HEK293 (cell line): ENCODE measurements at regions of chr19 and their contacts with region 1.

Region 1: DNA sequence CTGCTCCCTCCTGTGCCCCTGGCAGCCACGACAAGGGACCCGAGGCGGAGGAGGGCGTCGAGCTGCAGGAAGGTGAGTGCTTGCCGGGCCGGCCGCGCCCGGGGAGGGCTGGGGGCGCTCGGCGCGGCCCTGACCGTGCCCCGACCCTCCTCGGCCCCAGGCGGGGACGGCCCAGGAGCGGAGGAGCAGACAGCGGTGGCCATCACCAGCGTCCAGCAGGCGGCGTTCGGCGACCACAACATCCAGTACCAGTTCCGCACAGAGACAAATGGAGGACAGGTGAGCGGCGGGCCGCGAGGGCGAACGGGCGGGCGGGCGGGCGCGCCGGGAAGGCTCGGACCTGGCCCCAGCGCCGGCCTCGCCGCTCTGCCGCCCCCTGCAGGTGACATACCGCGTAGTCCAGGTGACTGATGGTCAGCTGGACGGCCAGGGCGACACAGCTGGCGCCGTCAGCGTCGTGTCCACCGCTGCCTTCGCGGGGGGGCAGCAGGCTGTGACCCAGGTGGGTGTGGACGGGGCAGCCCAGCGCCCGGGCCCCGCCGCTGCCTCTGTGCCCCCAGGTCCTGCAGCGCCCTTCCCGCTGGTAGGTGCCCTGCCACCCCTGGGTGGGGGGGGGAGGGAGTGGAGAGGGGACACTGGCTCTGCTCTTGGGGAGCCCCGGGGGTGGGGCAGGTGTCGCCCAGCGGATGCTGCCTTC is 807 bp downstream of the USF2 start:
- H3K4me3 ChIP-seq: peak overlapping the region; percentile 52
- H3K27ac ChIP-seq: peak overlapping the region; percentile 100
- H3K4me1 ChIP-seq: peaks cover 24% of the 10 kb centered on the region
- CTCF ChIP-seq: peak; percentile 96

Region 2: DNA sequence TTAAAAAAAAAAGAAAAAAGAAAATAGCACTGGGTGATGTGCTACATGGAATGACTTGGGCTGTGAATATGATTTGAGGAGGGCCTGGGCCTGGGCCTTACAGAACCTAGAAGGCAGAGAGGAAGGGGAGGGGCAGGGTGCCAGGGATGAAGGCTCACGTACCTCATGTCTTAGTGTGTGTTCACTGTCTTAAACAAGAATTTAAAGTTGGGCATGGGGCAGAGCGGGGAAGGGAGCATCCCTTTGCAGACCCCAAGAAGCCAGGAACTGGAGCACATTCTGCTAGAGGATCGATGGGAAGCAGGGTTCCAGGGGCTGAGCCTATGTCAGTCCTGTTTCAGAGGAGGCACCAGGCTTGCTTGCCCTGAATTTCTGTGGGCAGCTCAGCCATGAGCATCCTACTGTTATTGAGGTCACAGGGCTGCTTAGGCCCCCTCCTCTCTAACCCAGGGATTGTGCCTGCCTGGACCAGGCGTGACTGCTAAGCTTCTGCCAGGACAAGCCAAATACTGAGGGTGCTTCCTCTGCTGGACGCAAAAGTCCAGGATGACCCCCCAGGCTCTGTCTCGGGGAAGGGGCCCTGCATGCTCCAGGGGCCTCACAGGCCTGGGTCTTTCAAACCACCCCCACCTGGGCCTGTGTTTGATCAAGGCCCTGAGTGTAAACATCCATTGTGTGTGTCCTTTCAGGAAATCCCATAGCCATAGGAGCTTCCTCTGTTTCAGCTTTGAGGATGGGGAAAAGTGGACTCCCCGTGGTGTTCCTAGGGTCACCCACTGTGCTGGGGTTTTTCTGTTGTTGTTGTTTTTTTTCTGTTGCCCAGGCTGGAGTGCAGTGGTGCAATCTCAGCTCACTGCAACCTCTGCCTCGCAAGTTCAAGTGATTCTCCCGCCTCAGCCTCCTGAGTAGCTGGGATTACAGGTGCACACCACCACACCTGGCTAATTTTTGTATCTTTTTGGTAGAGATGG is 16.0 kb before region 1 on chr19:
- CTCF ChIA-PET with region 1: interaction called, 4 read pairs
- POLR2A ChIA-PET with region 1: interaction called, 35 read pairs
- H3K4me3 ChIP-seq: no peak overlapping the region
- H3K27ac ChIP-seq: no peak overlapping the region
- H3K4me1 ChIP-seq: peaks cover 6% of the 10 kb centered on the region
- CTCF ChIP-seq: no peak

Region 3: GRCh38 chr19:35279985-35280821 is 10.6 kb after region 1 on chr19:
- CTCF ChIA-PET with region 1: interaction called, 21 read pairs
- POLR2A ChIA-PET with region 1: interaction called, 23 read pairs
- H3K4me3 ChIP-seq: no peak overlapping the region
- H3K27ac ChIP-seq: no peak overlapping the region
- H3K4me1 ChIP-seq: no peaks in the 10 kb centered on the region
- CTCF ChIP-seq: no peak

Region 4: DNA sequence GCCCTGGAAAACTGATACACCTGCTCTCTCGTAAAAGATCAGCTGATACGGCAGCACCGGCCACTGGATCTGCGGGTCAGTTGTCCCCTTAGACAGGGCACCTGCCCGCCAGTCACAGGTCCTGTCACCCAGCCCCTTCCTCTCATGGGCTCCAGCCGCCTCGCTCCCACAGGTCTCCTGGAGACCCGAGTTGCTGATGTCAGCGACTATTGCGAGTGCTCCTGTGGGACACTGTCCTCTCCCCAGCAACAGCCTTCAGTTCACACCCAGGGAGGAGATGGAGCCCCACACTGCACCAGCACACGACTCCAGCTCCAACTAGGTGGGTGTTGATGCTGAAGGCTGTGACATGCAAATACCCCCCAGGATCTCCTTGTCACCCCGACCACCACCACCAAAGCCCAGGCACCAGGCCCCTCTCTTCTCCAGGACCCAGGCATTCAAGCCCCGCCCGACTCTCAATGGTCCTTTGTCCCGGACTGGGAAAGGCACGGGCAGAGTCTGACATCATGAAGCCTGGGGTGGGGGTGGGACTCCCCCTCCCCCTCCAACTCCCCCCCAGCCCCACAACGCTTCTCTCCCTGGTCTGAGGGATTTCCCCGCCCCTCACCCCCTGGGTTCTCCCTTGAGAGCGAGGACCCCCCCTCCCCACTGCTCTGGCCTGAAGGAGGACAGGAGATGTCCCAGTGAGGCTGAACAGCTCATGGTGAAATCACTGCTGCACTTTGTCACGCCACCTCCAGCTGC is 21.0 kb after region 1 on chr19:
- CTCF ChIA-PET with region 1: interaction called, 17 read pairs
- POLR2A ChIA-PET with region 1: interaction called, 17 read pairs
- H3K4me3 ChIP-seq: no peak overlapping the region
- H3K27ac ChIP-seq: no peak overlapping the region
- H3K4me1 ChIP-seq: peaks cover 8% of the 10 kb centered on the region
- CTCF ChIP-seq: no peak

Region 5: GRCh38 chr19:35612559-35613321 is 343.2 kb after region 1 on chr19 and contains the start of gene HAUS5:
- CTCF ChIA-PET with region 1: no interaction called
- POLR2A ChIA-PET with region 1: no interaction called
- H3K4me3 ChIP-seq: peak within 1 kb of the TSS; percentile 68
- H3K27ac ChIP-seq: peak within 1 kb of the TSS; percentile 94
- H3K4me1 ChIP-seq: peaks cover 13% of the 10 kb centered on the region
- CTCF ChIP-seq: peak; percentile 88